ENCODE measurements at regions of chr19 and their contacts with region 1.

Region 1: GRCh38 chr19:50679177-50680125 is 30.2 kb downstream of the C19orf81 start:
- DNase-seq: peak; percentile 88
- ATAC-seq: peak; percentile 98

Region 2: GRCh38 chr19:50779504-50780457 is 100.3 kb after region 1 on chr19:
- intact Hi-C with region 1: loop called (anchors 10 kb)
- DNase-seq: no peak
- ATAC-seq: no peak